OCI-LY7 (cell line): ENCODE measurements at regions of chr1 and their contacts with region 1.

Region 1: DNA sequence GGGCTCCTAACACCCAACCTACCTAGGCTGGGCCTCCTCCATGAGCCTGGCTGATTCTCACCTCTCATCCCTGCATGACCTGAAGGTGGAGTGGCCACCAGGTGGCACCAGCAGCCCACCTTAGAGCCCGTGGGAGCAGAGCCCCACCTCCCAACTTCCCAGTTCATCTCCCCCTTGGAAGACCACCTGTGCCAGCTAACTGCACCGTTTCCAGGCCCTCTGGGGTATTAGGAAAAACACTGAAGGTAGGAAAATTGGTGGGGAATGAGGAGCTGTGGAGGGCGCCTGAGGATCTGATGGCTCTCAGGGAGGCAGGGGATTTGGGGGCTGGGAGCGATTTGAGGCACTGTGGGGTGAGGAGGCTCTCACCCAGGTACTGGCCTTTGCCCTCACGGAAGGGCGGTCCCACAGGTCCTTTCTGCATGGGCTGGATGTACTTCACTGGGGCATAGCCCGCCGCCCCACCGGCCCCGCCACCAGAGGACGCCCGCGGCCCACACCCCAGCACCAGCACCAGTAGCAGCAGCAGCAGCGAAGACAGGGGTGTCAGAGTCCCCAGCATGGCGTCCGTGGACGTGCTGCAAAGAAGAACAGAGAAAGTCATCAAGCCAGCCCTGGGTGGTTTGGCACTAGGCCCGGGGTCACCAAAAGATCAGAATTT is 11.1 kb downstream of the ADPRS start:
- DNase-seq: peak; percentile 77
- H3K4me3 ChIP-seq: no peak overlapping the region
- H3K27ac ChIP-seq: no peak overlapping the region
- H3K4me1 ChIP-seq: no peaks in the 10 kb centered on the region
- CTCF ChIP-seq: peak; percentile 96

Region 2: GRCh38 chr1:36083993-36084738 is 15.6 kb before region 1 on chr1 and contains the start of gene TEKT2:
- CTCF ChIA-PET with region 1: no interaction called
- POLR2A ChIA-PET with region 1: no interaction called
- intact Hi-C with region 1: no loop called
- DNase-seq: no peak
- H3K4me3 ChIP-seq: no peak within 1 kb of the TSS
- H3K27ac ChIP-seq: no peak within 1 kb of the TSS
- H3K4me1 ChIP-seq: peaks cover 5% of the 10 kb centered on the region
- CTCF ChIP-seq: no peak
- total RNA-seq, gene TEKT2: 0.10 TPM in 1 of 2 replicates, not detected in the other

Region 3: DNA sequence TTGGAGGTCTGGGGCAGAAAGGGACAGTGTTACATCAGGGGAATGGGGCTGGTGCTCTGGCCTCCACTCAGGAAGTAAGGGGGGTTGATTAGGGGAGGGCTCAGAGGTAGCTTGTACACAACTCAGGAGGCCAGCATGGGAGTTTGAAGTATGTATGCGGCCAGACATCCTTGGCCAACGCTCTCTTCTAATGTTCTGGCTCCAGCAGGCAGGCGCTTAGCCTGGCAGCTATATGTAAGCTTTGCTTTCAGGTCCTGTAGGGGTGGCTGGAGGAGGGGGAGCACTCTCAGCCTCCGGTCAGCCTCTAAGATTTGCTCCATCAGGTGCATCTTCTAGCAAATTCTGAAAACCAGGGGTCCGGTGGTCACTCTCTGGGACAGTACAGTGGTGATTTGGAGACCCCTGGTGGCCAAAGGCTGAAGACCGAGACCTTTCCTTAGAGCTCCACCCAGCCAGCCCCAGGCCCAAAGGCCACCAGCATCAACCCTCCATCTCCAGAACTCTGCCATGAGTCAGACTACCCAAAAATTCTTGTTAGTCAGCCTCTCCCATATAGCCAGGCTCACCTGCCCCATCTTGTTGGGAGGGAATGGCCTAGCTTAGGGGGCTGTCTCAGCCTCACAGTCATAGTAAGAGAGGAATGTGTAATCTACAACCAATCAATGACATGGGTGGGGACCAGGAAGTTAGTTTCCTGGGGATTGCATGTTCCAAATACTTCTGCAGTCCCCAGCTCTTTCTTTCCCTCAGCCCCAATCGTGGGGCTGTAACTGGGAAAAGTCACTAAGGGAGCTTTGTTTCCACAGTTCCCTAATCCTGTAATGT is 34.9 kb after region 1 on chr1:
- CTCF ChIA-PET with region 1: interaction called, 3 read pairs
- POLR2A ChIA-PET with region 1: no interaction called
- intact Hi-C with region 1: loop called (anchors 1 kb)
- DNase-seq: peak; percentile 60
- H3K4me3 ChIP-seq: no peak overlapping the region
- H3K27ac ChIP-seq: no peak overlapping the region
- H3K4me1 ChIP-seq: no peaks in the 10 kb centered on the region
- CTCF ChIP-seq: peak; percentile 84

Region 4: GRCh38 chr1:36187800-36188593 is 88.2 kb after region 1 on chr1:
- CTCF ChIA-PET with region 1: no interaction called
- POLR2A ChIA-PET with region 1: no interaction called
- intact Hi-C with region 1: loop called (anchors 1 kb)
- DNase-seq: peak; percentile 89
- H3K4me3 ChIP-seq: no peak overlapping the region
- H3K27ac ChIP-seq: no peak overlapping the region
- H3K4me1 ChIP-seq: peaks cover 5% of the 10 kb centered on the region
- CTCF ChIP-seq: peak; percentile 96

Region 5: GRCh38 chr1:36203554-36204346 is 103.9 kb after region 1 on chr1:
- CTCF ChIA-PET with region 1: no interaction called
- POLR2A ChIA-PET with region 1: no interaction called
- intact Hi-C with region 1: no loop called
- DNase-seq: no peak
- H3K4me3 ChIP-seq: no peak overlapping the region
- H3K27ac ChIP-seq: no peak overlapping the region
- H3K4me1 ChIP-seq: peaks cover 12% of the 10 kb centered on the region
- CTCF ChIP-seq: no peak

Region 6: GRCh38 chr1:36269408-36269838 is 169.6 kb after region 1 on chr1:
- CTCF ChIA-PET with region 1: no interaction called
- POLR2A ChIA-PET with region 1: no interaction called
- intact Hi-C with region 1: no loop called
- DNase-seq: no peak
- H3K4me3 ChIP-seq: no peak overlapping the region
- H3K27ac ChIP-seq: no peak overlapping the region
- H3K4me1 ChIP-seq: no peaks in the 10 kb centered on the region
- CTCF ChIP-seq: no peak

Region 7: GRCh38 chr1:36285448-36286101 is 185.8 kb after region 1 on chr1:
- CTCF ChIA-PET with region 1: no interaction called
- POLR2A ChIA-PET with region 1: no interaction called
- intact Hi-C with region 1: loop called (anchors 1 kb)
- DNase-seq: peak; percentile 88
- H3K4me3 ChIP-seq: no peak overlapping the region
- H3K27ac ChIP-seq: no peak overlapping the region
- H3K4me1 ChIP-seq: peaks cover 4% of the 10 kb centered on the region
- CTCF ChIP-seq: peak; percentile 96

Region 8: DNA sequence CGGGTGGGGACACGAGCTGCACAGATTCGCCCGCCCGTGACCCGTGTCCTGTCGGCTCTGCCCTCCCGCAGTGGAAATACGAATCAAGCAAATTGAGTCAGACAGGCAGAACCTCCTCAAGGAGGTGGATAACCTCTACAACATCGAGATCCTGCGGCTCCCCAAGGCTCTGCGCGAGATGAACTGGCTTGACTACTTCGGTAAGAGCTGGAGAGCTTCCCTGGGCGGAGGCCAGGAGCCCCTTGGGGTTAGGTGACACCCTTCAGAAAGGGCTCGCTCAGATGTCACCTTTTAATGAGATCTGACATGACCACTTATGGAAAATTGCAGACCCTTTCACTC is 1593.0 kb after region 1 on chr1:
- CTCF ChIA-PET with region 1: no interaction called
- POLR2A ChIA-PET with region 1: no interaction called
- intact Hi-C with region 1: no loop called
- DNase-seq: no peak
- H3K4me3 ChIP-seq: peak overlapping the region; percentile 99
- H3K27ac ChIP-seq: peak overlapping the region; percentile 76
- H3K4me1 ChIP-seq: peaks cover 36% of the 10 kb centered on the region
- CTCF ChIP-seq: no peak